ENCODE measurements at regions of chr9 and their contacts with region 1.

Region 1: DNA sequence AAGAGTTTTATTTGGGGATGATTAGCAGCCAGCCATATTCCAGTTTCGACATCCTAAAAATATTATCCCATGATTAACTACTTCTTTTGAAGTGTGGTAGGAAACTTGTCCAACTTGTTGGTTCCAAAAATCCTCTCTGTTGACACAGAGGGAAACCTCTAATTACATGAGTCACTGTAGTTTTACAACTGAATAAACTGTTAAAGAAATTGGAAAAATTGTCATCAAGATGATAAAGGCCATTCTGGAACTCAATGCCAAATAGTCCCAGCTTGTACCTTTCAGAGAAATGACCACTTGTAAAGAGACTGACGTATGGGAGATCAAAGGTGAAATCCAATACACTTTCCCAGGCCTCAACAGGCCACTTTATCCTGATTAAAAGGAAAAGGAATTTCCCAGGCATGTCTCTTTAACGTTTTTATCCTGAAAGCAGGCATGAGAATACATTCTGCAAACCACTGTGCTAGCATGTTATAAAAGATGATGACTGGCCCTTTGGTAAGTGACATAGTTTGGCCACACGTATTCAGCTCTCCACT is 261.6 kb downstream of the GLIS3 start:
- DNase-seq: no peak

Region 2: DNA sequence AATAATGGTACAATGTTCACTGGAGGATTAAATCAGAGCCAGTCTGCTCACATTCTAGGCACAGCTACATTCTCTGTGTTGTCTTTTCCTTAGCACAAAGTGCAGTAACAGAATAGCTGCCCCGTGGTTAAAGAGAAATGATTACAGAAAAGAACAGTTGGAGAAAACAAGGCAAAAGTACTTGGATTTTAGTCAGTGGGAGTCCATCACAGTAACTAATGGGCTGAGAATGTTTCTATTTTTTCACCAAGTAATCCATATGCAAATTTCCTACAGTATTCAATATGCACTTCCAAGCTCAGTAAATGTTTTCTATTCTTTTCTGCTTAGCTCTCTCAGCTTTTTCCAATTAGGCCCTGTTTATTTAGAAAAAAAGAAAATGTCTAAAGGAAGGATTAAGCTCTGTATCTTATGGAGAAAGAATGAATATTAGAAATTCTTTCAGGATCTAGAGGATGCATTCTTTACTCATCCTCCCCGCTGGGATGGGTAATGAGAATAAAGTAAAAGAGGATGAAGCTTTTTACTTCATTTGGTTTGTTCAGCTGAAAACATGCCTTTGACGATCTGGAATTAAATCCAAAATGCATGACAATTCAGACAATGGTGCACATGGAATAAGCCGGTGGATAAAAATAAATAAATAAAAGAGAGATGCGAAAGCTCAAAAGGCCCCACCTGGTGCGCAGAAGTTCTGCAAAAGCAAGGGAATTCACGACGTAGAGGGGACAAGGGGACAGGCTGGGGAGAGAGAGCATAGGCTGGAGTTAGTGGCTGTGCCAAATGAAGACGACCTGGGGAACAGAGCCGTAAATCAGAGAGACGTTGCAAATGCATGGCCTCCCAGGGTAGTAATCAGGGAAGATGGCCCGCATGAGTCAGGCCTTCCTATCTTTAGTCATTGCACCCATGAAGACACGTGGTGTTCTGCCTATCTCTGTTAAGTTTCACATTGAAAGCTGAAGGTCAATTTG is 83.6 kb before region 1 on chr9:
- intact Hi-C with region 1: loop called (anchors 10 kb)
- DNase-seq: no peak